Activated T-helper 1 cell treated with anti-CD3 and anti-CD28 coated beads, Interleukin-12 subunit alpha, Interleukin-12 subunit beta, Interleukin-2, Interleukin-4 antibody, amounts not matched to agents 30 ng/mL and 10 ng/mL and 1 ng/mL, durations not matched to agents 14 hours and 24 hours and 36 hours (primary cell): ENCODE measurements at regions of chr6 and their contacts with region 1.

Region 1: GRCh38 chr6:30533460-30534294 is 22.6 kb downstream of the GNL1 start:
- DNase-seq: no peak
- H3K4me3 Mint-ChIP-seq: peak overlapping the region; percentile 53
- H3K27ac Mint-ChIP-seq: peak overlapping the region; percentile 55
- H3K4me1 Mint-ChIP-seq: peaks cover 52% of the 10 kb centered on the region
- H3K27me3 Mint-ChIP-seq: no peaks in the 10 kb centered on the region

Region 2: DNA sequence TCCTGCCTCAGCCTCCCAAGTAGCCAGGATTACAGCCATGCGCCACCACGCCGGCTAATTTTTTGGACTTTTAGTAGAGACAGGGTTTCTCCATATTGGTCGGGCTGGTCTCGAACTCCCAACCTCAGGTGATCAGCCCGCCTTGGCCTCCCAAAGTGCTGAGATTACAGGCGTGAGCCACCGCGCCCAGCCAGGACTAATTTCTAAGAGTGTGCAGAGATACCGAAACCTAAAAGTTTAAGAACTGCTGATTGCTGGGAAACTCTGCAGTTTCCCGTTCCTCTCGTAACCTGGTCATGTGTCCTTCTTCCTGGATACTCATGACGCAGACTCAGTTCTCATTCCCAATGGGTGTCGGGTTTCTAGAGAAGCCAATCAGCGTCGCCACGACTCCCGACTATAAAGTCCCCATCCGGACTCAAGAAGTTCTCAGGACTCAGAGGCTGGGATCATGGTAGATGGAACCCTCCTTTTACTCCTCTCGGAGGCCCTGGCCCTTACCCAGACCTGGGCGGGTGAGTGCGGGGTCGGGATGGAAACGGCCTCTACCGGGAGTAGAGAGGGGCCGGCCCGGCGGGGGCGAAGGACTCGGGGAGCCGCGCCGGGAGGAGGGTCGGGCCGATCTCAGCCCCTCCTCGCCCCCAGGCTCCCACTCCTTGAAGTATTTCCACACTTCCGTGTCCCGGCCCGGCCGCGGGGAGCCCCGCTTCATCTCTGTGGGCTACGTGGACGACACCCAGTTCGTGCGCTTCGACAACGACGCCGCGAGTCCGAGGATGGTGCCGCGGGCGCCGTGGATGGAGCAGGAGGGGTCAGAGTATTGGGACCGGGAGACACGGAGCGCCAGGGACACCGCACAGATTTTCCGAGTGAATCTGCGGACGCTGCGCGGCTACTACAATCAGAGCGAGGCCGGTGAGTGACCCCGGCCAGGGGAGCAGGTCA is 44.3 kb before region 1 on chr6 and contains the start of gene HLA-E:
- intact Hi-C with region 1: loop called (anchors 1 kb)
- DNase-seq: peak; percentile 91
- H3K4me3 Mint-ChIP-seq: peak within 1 kb of the TSS; percentile 97
- H3K27ac Mint-ChIP-seq: peak within 1 kb of the TSS; percentile 99
- H3K4me1 Mint-ChIP-seq: peaks cover 64% of the 10 kb centered on the region
- H3K27me3 Mint-ChIP-seq: peaks cover 3% of the 10 kb centered on the region
- total RNA-seq, gene HLA-E: 476 and 483 TPM in 2 replicates

Region 3: GRCh38 chr6:30508890-30509736 is 24.6 kb before region 1 on chr6:
- intact Hi-C with region 1: loop called (anchors 1 kb)
- DNase-seq: peak; percentile 53
- H3K4me3 Mint-ChIP-seq: peak overlapping the region; percentile 19
- H3K27ac Mint-ChIP-seq: peak overlapping the region; percentile 93
- H3K4me1 Mint-ChIP-seq: peaks cover 47% of the 10 kb centered on the region
- H3K27me3 Mint-ChIP-seq: no peaks in the 10 kb centered on the region

Region 4: DNA sequence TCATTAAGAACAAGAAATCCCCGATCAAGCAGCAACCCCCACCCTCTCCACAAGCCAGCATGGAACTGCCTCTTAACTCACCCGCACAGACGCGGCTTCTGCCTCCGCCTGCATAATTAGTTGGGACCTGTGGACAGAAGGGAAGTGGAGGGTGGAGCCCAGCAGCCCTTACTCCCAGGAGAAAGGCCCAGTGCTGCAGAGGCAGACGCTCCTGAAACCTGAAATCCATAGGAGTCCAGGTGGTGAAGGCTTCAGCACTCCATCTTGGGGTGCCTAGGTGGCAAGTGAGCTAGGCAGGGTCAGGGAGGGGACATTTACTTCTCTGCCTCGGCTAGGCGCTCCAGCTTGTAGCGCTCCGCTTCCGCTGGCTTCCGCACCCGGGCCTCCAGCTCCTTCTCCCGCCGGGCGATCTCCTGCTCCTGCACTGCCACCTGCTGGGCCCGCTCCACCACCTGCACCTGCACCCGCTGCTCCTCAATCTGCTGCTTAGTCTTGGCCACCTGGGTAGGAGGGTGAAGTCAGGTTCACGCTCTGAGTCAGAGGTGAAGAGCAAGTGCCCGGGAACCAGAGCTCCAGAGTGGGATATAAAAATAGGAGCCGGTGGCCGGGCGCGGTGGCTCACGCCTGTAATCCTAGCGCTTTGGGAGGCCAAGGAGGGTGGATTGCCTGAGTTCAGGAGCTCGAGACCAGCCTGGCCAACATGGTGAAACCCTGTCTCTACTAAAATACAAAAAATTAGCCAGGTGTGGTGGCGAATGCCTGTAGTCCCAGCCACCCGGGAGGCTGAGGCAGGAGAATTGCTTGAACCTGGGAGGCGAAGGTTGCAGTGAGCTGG is 197.1 kb after region 1 on chr6:
- intact Hi-C with region 1: loop called (anchors 5 kb)
- DNase-seq: peak; percentile 79
- H3K4me3 Mint-ChIP-seq: peak overlapping the region; percentile 19
- H3K27ac Mint-ChIP-seq: peak overlapping the region; percentile 55
- H3K4me1 Mint-ChIP-seq: peaks cover 51% of the 10 kb centered on the region
- H3K27me3 Mint-ChIP-seq: no peaks in the 10 kb centered on the region